B cell (primary cell): ENCODE measurements at regions of chr10 and their contacts with region 1.

Region 1: GRCh38 chr10:119207367-119207668 is at the start of gene GRK5:
- DNase-seq: peak; percentile 98
- ATAC-seq: peak; percentile 83
- H3K4me3 ChIP-seq: peak within 1 kb of the TSS; percentile 44 to 94 (median 74)
- H3K4me3 Mint-ChIP-seq: peak within 1 kb of the TSS; percentile 95
- H3K27ac ChIP-seq: peak within 1 kb of the TSS; percentile 73 to 83
- H3K27ac Mint-ChIP-seq: peak within 1 kb of the TSS; percentile 95
- H3K4me1 ChIP-seq: peaks cover 27 to 38% of the 10 kb centered on the region in 2 donors
- H3K4me1 Mint-ChIP-seq: peaks cover 43% of the 10 kb centered on the region
- H3K27me3 ChIP-seq: no peaks in the 10 kb centered on the region
- H3K27me3 Mint-ChIP-seq: no peaks in the 10 kb centered on the region
- CTCF ChIP-seq: no peak
- total RNA-seq, gene GRK5: 54.8 and 57.2 TPM in 2 replicates

Region 2: GRCh38 chr10:119189811-119190282 is 17.5 kb before region 1 on chr10:
- CTCF ChIA-PET with region 1: interaction called, 14 read pairs
- POLR2A ChIA-PET with region 1: no interaction called
- intact Hi-C with region 1: no loop called
- DNase-seq: peak; percentile 47
- ATAC-seq: no peak
- H3K4me3 ChIP-seq: no peak overlapping the region
- H3K4me3 Mint-ChIP-seq: no peak overlapping the region
- H3K27ac ChIP-seq: no peak overlapping the region
- H3K27ac Mint-ChIP-seq: peak overlapping the region; percentile 41
- H3K4me1 ChIP-seq: peaks cover 8 to 10% of the 10 kb centered on the region in 2 donors
- H3K4me1 Mint-ChIP-seq: peaks cover 11% of the 10 kb centered on the region
- H3K27me3 ChIP-seq: no peaks in the 10 kb centered on the region
- H3K27me3 Mint-ChIP-seq: no peaks in the 10 kb centered on the region
- CTCF ChIP-seq: no peak

Region 3: DNA sequence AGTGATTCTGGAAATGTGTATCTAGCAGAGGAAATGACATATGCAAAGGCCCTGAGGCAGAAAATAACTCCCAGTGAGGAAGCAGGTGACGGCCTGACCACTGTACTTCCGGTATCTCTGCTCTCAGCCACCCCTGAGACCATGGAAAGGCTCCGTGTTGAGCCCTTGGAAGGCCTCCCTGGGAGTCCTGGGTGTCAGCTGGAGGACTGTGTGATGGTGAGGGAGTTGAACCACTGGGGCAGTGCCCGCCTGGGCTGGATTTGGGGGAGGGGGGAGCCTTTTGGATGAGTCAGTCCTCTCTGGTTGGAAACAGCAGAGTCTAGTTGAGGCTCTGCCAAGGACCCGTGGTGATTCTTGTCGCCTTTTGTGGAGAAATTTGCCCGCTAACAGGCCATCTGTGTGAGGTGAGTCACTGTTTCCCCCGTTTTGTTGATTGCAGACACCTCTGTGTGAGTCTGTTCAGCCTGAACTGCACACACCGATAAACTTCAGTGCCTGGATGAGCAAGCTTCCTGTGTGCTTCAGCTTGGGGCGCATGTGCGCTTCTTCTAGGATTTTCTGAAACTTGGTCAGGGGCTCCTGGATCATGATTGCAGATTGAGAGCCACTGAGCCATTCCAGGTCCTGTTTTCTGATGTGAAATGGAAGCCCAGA is 98.7 kb after region 1 on chr10:
- CTCF ChIA-PET with region 1: interaction called, 118 read pairs
- POLR2A ChIA-PET with region 1: interaction called, 32 read pairs
- intact Hi-C with region 1: loop called (anchors 1 kb)
- DNase-seq: peak; percentile 90
- ATAC-seq: peak; percentile 71
- H3K4me3 ChIP-seq: peak overlapping the region; percentile 31 to 62 (median 42)
- H3K4me3 Mint-ChIP-seq: peak overlapping the region; percentile 87
- H3K27ac ChIP-seq: peak overlapping the region; percentile 99
- H3K27ac Mint-ChIP-seq: peak overlapping the region; percentile 99
- H3K4me1 ChIP-seq: peaks cover 97 to 100% of the 10 kb centered on the region in 2 donors
- H3K4me1 Mint-ChIP-seq: peaks cover 95% of the 10 kb centered on the region
- H3K27me3 ChIP-seq: no peaks in the 10 kb centered on the region
- H3K27me3 Mint-ChIP-seq: no peaks in the 10 kb centered on the region
- CTCF ChIP-seq: no peak

Region 4: DNA sequence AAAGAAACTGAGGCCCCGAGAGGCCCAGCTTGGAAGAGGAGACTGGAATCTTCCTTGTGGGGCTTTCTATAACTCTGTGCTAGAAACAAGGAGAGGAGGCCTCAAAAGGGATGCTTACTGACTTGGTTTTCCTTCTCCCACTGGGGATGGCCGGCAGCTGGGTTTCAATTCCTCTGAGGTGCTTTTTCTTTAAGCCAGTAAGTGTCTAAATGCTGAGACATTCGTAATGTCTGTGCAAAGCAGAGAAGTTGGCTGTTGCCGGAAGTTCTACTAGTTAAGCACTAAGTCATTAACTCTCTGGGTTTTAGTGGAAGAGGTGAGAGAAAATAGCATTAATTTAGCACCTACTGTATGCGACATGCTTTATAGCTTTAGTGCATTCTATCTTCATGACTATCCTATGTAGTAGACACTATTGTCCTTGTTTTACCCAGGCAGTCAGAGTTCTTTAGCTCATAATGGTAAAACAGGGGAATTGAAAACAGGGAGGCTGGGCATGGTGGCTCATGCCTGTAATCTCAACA is 200.0 kb after region 1 on chr10:
- CTCF ChIA-PET with region 1: interaction called, 23 read pairs
- POLR2A ChIA-PET with region 1: interaction called, 7 read pairs
- intact Hi-C with region 1: no loop called
- DNase-seq: peak; percentile 31
- ATAC-seq: no peak
- H3K4me3 ChIP-seq: no peak overlapping the region
- H3K4me3 Mint-ChIP-seq: no peak overlapping the region
- H3K27ac ChIP-seq: peak overlapping the region in 1 of 2 donors; percentile 49
- H3K27ac Mint-ChIP-seq: peak overlapping the region; percentile 23
- H3K4me1 ChIP-seq: peaks cover 23% of the 10 kb centered on the region in 2 donors
- H3K4me1 Mint-ChIP-seq: peaks cover 34% of the 10 kb centered on the region
- H3K27me3 ChIP-seq: no peaks in the 10 kb centered on the region
- H3K27me3 Mint-ChIP-seq: no peaks in the 10 kb centered on the region
- CTCF ChIP-seq: no peak

Region 5: DNA sequence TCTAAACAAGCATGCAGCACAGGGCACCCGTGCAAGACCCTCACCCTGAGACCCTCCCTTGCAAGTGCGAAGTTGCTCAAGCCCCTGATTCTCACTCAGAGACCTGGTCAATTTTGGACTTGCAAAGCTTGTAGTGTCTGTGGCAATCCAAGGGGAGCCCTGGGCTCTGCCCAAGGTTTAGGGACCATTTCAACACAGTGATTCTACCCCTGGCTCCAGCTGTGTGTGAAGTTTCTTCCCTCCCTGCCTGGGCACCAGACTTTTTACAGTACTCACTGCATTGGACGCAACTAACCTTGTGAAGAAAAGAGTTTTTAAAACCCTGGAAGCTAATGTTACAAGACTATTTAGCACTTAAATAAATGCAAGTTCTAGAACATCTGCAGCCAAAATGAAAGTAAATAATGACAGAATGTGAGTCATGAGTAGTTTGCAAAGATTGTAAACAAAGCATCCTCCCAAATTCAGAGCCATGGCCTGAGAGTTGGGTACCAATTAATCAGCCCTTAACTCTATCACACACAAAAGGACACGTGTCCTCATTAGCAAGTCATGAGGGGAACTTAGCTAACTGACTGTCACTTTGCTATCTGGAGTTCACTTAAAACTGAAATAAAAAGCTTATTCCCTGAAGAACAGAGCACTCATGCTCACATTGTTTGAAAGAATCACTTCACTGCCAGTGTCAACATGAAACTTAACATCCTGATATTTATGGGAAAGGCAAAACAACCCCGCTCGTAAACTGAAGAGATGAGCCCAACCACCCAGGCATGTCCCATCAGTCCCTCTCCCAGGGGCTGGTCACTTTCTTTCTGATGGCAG is 287.1 kb after region 1 on chr10:
- CTCF ChIA-PET with region 1: interaction called, 70 read pairs
- POLR2A ChIA-PET with region 1: interaction called, 5 read pairs
- intact Hi-C with region 1: loop called (anchors 1 kb)
- DNase-seq: no peak
- ATAC-seq: no peak
- H3K4me3 ChIP-seq: no peak overlapping the region
- H3K4me3 Mint-ChIP-seq: no peak overlapping the region
- H3K27ac ChIP-seq: no peak overlapping the region
- H3K27ac Mint-ChIP-seq: peak overlapping the region; percentile 53
- H3K4me1 ChIP-seq: peaks cover 3 to 8% of the 10 kb centered on the region in 2 donors
- H3K4me1 Mint-ChIP-seq: peaks cover 13% of the 10 kb centered on the region
- H3K27me3 ChIP-seq: no peaks in the 10 kb centered on the region
- H3K27me3 Mint-ChIP-seq: no peaks in the 10 kb centered on the region
- CTCF ChIP-seq: no peak

Region 6: GRCh38 chr10:119872860-119873681 is 665.8 kb after region 1 on chr10:
- CTCF ChIA-PET with region 1: no interaction called
- POLR2A ChIA-PET with region 1: no interaction called
- intact Hi-C with region 1: loop called (anchors 2 kb)
- DNase-seq: peak; percentile 96
- ATAC-seq: peak; percentile 92
- H3K4me3 ChIP-seq: peak overlapping the region; percentile 71 to 90 (median 89)
- H3K4me3 Mint-ChIP-seq: peak overlapping the region; percentile 91
- H3K27ac ChIP-seq: peak overlapping the region; percentile 83
- H3K27ac Mint-ChIP-seq: peak overlapping the region; percentile 86
- H3K4me1 ChIP-seq: peaks cover 22 to 23% of the 10 kb centered on the region in 2 donors
- H3K4me1 Mint-ChIP-seq: peaks cover 33% of the 10 kb centered on the region
- H3K27me3 ChIP-seq: no peaks in the 10 kb centered on the region
- H3K27me3 Mint-ChIP-seq: no peaks in the 10 kb centered on the region
- CTCF ChIP-seq: no peak

Region 7: DNA sequence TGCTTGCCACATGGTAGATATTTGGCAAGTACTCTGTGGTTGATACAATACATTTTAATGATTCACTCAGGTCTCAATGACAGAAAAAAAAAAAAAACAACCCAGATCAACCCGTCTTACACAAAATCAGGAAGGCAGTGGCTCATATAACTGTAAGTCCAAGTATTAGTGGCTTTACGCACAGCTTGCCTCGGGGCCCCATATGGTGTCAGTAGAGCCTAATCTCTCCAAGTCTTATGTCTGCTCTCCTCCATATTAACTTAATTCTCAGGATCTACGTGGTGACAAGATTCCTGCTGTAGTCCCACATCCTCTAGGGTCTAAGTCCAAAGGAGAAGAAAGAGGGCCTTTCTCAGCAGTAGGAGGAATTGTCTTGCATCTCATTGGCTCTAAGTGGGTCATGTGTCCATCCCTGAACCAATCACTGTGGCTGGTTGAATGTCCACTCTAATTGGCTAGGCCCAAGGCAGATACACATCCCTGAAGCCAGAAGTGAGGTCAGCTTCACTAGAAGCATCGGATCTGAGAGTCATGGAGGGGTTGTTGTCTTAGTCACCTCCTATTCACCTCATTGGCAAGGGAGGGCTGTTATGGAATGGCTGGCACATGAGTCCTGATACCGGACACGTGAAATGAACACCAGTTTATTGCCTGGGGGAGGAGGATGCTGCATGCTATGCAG is 1229.3 kb after region 1 on chr10:
- CTCF ChIA-PET with region 1: no interaction called
- POLR2A ChIA-PET with region 1: no interaction called
- intact Hi-C with region 1: no loop called
- DNase-seq: no peak
- ATAC-seq: no peak
- H3K4me3 ChIP-seq: no peak overlapping the region
- H3K4me3 Mint-ChIP-seq: no peak overlapping the region
- H3K27ac ChIP-seq: no peak overlapping the region
- H3K27ac Mint-ChIP-seq: no peak overlapping the region
- H3K4me1 ChIP-seq: no peaks in the 10 kb centered on the region
- H3K4me1 Mint-ChIP-seq: no peaks in the 10 kb centered on the region
- H3K27me3 ChIP-seq: no peaks in the 10 kb centered on the region
- H3K27me3 Mint-ChIP-seq: peaks cover 11% of the 10 kb centered on the region
- CTCF ChIP-seq: no peak